PC-3 (cell line): ENCODE measurements at regions of chr14 and their contacts with region 1.

Region 1: GRCh38 chr14:93239869-93240677 is 33.0 kb downstream of the UBR7 start:
- DNase-seq: peak; percentile 95
- ATAC-seq: peak; percentile 95
- H3K4me3 ChIP-seq: peak overlapping the region; percentile 54
- H3K27ac ChIP-seq: peak overlapping the region; percentile 94
- H3K4me1 ChIP-seq: peaks cover 45% of the 10 kb centered on the region
- H3K27me3 ChIP-seq: no peaks in the 10 kb centered on the region
- CTCF ChIP-seq: no peak

Region 2: GRCh38 chr14:93309427-93309966 is 69.4 kb after region 1 on chr14:
- CTCF ChIA-PET with region 1: no interaction called
- POLR2A ChIA-PET with region 1: no interaction called
- intact Hi-C with region 1: loop called (anchors 2 kb)
- DNase-seq: peak; percentile 76
- ATAC-seq: peak; percentile 89
- H3K4me3 ChIP-seq: no peak overlapping the region
- H3K27ac ChIP-seq: peak overlapping the region; percentile 82
- H3K4me1 ChIP-seq: peaks cover 30% of the 10 kb centered on the region
- H3K27me3 ChIP-seq: no peaks in the 10 kb centered on the region
- CTCF ChIP-seq: no peak

Region 3: GRCh38 chr14:93319958-93320357 is 79.9 kb after region 1 on chr14:
- CTCF ChIA-PET with region 1: no interaction called
- POLR2A ChIA-PET with region 1: no interaction called
- intact Hi-C with region 1: no loop called
- DNase-seq: no peak
- ATAC-seq: 0 out of 2 replicates have a peak, but pooled peaks have one; percentile 23
- H3K4me3 ChIP-seq: no peak overlapping the region
- H3K27ac ChIP-seq: no peak overlapping the region
- H3K4me1 ChIP-seq: peaks cover 19% of the 10 kb centered on the region
- H3K27me3 ChIP-seq: no peaks in the 10 kb centered on the region
- CTCF ChIP-seq: no peak

Region 4: GRCh38 chr14:93464271-93464670 is 224.2 kb after region 1 on chr14:
- CTCF ChIA-PET with region 1: no interaction called
- POLR2A ChIA-PET with region 1: no interaction called
- intact Hi-C with region 1: loop called (anchors 10 kb)
- DNase-seq: no peak
- ATAC-seq: no peak
- H3K4me3 ChIP-seq: no peak overlapping the region
- H3K27ac ChIP-seq: no peak overlapping the region
- H3K4me1 ChIP-seq: no peaks in the 10 kb centered on the region
- H3K27me3 ChIP-seq: peaks cover 53% of the 10 kb centered on the region
- CTCF ChIP-seq: no peak